RWPE1 (cell line): ENCODE measurements at regions of chr10 and their contacts with region 1.

Region 1: GRCh38 chr10:27661514-27662286 is 83.9 kb downstream of the MKX start:
- DNase-seq: no peak
- H3K27ac ChIP-seq: no peak overlapping the region
- CTCF ChIP-seq: no peak

Region 2: DNA sequence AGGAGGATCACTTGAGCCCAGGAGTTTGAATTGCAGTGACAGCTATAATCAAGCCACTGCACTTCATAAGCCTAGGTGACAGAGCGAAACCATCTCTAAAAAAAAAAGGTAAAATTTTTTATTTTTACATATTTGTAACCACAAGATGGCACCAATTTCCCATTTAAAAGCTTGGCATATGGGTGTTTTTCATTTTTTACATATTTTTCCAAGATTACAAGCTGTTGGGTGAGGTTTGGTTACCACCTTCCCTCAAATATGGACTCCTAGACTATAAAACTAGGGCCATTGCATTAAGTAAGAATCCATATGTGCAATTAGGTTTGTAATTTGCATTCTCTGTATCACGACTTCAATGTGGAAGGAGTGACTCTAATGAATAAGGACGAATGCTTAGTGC is 291.8 kb before region 1 on chr10:
- CTCF ChIA-PET with region 1: interaction called, 10 read pairs
- POLR2A ChIA-PET with region 1: no interaction called
- DNase-seq: peak; percentile 27
- H3K27ac ChIP-seq: no peak overlapping the region
- CTCF ChIP-seq: 0 out of 2 replicates have a peak, but pooled peaks have one; percentile 14

Region 3: GRCh38 chr10:27547482-27547881 is 114.2 kb before region 1 on chr10:
- CTCF ChIA-PET with region 1: no interaction called
- POLR2A ChIA-PET with region 1: no interaction called
- DNase-seq: no peak
- H3K27ac ChIP-seq: no peak overlapping the region
- CTCF ChIP-seq: no peak

Region 4: DNA sequence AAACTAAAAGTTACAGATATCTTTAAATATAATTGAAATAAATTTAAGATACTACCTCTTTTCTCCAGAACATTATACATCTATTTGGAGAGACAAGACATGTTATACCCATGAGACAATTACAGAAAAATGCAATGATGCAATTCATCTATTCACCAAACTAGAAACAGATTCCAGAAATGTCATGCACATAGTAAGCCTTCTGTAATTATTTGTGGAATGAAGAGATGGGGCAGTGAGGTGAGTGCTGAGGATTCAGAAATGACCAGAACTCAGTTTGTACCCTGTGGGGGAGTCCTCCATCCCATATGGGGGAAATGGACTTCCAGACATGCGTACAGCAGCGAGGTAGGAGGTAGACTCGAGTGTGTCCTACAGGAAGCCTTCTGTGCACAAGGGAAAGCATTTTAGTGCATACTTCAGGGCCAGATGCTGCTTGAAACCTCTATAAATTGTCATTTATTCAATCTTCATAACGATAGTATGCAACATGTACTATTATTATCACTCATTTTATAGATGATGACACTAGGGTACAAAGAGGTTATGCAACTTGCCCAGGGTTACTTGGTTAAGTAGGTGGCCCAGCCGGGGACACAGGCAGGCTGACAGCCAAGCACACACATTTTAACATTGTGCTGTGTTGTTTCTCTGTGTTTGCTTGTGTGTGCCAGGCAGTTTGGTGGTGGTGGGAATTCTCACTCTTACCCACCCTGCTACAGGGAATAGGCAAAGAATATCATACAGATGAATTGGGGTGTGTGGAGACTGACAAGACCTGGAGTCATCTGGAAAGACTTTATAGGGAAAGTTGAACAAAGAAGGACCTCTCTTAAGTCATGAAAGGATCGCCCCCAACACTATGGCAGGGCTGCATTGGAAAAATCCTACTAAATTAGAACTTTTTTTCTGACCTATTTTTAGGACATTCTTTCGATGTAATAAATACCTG is 15.2 kb before region 1 on chr10:
- CTCF ChIA-PET with region 1: no interaction called
- POLR2A ChIA-PET with region 1: no interaction called
- DNase-seq: no peak
- H3K27ac ChIP-seq: peak overlapping the region; percentile 3; the same call in 1 of the 2 replicates
- CTCF ChIP-seq: no peak